MCF 10A (cell line): ENCODE measurements at regions of chr2 and their contacts with region 1.

Region 1: DNA sequence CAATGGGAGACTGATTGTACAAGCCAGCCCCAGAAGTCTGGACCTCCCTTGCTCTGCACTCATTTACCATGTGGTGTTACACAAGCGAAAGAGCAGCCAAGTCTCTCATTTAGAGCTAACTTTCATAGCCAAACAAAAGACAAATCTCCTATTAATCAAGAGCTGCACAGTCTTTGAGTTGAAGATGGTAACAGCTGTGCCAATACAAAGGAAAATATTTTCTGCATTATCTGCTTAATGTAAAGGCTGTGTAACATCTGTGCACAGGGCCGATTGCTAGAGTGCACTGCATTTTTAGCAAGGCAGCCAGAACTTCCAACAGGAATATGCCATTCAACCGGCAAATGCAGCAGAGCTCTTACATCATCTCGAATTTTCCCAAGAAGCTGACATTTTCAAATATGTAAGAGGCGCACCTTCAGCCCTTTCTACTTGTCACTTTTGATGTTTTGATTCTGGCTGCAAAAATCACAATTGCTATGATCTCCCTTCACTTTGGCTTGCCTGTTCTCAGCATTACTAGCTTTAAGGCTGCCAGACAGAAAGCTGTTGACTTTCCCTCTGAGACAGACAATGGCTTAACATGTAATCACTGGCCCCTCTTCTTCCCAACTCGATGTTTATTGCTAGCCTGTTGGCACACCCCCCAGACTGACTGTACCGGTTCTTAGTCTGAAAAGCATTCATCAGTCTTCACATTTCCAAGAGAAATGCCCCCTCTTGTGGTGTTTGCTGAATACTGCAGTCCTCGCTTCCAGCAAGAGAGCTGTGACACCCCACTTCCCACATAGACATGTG is 96.9 kb upstream of the TANK start:
- DNase-seq: peak; percentile 86
- H3K4me3 Mint-ChIP-seq: no peak overlapping the region
- H3K27ac Mint-ChIP-seq: no peak overlapping the region
- H3K4me1 Mint-ChIP-seq: peaks cover 6% of the 10 kb centered on the region
- H3K27me3 Mint-ChIP-seq: no peaks in the 10 kb centered on the region
- CTCF ChIP-seq: peak; percentile 86

Region 2: DNA sequence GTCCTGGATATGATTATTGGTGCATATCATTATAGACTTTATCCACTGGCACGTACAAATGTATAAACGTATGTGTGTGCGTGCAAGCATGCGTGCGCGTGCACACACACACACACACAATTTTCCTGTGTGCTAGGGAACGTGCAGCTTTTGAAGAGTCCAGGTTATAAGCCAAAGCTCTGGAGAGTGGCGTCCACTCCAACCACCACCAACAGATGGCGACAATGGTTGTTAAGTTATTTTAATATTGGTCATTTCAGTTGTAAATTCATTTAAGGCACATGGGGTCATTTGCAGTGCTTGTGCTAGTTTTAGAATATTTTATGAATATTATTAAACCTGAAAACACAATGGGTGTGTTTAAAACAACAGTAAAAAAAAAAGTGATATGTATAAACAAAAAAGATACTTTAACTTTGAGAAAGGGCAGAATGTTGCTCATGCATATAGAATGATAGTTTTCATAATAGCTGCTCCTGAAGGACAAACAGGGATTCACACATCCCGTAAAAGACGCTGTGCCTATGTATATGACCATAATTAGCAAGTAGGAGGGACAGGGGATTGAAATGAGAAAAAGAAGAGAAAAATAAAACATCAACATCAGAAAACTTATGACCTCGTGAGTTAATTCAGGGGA is 739.1 kb before region 1 on chr2:
- CTCF ChIA-PET with region 1: interaction called, 17 read pairs
- POLR2A ChIA-PET with region 1: no interaction called
- intact Hi-C with region 1: no loop called
- DNase-seq: peak; percentile 66
- H3K4me3 Mint-ChIP-seq: no peak overlapping the region
- H3K27ac Mint-ChIP-seq: peak overlapping the region; percentile 36
- H3K4me1 Mint-ChIP-seq: peaks cover 30% of the 10 kb centered on the region
- H3K27me3 Mint-ChIP-seq: no peaks in the 10 kb centered on the region
- CTCF ChIP-seq: peak; percentile 71

Region 3: DNA sequence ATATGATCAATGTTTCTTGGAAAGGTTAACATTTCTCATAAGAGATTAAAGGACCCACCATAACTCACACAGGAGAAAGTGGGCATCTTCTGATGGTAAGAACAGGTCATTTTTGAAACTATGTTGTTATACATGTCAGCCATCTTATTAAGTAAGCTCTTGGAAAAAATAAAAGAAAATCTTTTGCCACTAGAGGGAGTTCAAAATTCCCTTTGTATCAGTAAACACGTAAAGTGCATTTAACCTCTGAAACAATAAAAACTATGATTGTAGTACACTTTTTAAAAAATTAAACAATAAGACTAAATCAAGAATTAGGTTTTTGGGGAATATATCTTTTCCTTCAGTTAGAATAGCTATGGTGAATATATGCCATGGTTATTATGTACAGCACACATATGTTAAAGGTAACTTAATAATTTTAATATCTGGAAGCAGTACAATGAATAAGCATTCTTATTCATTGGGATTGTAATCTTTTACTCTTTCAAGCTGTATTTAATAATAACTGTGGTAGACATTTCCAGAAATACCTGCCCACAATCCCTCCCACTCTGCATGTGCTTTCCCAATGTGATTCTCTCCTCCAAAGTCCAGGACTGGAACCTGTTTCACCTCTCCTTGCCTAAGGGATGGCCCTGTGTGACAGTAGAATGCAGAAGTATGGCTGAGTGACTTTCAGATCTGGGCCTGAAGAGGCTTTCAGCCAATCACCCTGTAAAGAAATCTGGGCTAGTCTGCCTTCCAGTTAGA is 633.9 kb before region 1 on chr2:
- CTCF ChIA-PET with region 1: interaction called, 5 read pairs
- POLR2A ChIA-PET with region 1: no interaction called
- intact Hi-C with region 1: loop called (anchors 2 kb)
- DNase-seq: peak; percentile 62
- H3K4me3 Mint-ChIP-seq: no peak overlapping the region
- H3K27ac Mint-ChIP-seq: peak overlapping the region; percentile 93
- H3K4me1 Mint-ChIP-seq: peaks cover 24% of the 10 kb centered on the region
- H3K27me3 Mint-ChIP-seq: no peaks in the 10 kb centered on the region
- CTCF ChIP-seq: peak; percentile 32

Region 4: GRCh38 chr2:161004379-161004778 is 59.0 kb before region 1 on chr2:
- CTCF ChIA-PET with region 1: interaction called, 12 read pairs
- POLR2A ChIA-PET with region 1: no interaction called
- intact Hi-C with region 1: no loop called
- DNase-seq: peak; percentile 28
- H3K4me3 Mint-ChIP-seq: no peak overlapping the region
- H3K27ac Mint-ChIP-seq: no peak overlapping the region
- H3K4me1 Mint-ChIP-seq: no peaks in the 10 kb centered on the region
- H3K27me3 Mint-ChIP-seq: no peaks in the 10 kb centered on the region
- CTCF ChIP-seq: peak; percentile 39

Region 5: GRCh38 chr2:161036926-161037325 is 26.4 kb before region 1 on chr2:
- CTCF ChIA-PET with region 1: interaction called, 20 read pairs
- POLR2A ChIA-PET with region 1: interaction called, 3 read pairs
- intact Hi-C with region 1: no loop called
- DNase-seq: no peak
- H3K4me3 Mint-ChIP-seq: no peak overlapping the region
- H3K27ac Mint-ChIP-seq: no peak overlapping the region
- H3K4me1 Mint-ChIP-seq: no peaks in the 10 kb centered on the region
- H3K27me3 Mint-ChIP-seq: no peaks in the 10 kb centered on the region
- CTCF ChIP-seq: no peak

Region 6: DNA sequence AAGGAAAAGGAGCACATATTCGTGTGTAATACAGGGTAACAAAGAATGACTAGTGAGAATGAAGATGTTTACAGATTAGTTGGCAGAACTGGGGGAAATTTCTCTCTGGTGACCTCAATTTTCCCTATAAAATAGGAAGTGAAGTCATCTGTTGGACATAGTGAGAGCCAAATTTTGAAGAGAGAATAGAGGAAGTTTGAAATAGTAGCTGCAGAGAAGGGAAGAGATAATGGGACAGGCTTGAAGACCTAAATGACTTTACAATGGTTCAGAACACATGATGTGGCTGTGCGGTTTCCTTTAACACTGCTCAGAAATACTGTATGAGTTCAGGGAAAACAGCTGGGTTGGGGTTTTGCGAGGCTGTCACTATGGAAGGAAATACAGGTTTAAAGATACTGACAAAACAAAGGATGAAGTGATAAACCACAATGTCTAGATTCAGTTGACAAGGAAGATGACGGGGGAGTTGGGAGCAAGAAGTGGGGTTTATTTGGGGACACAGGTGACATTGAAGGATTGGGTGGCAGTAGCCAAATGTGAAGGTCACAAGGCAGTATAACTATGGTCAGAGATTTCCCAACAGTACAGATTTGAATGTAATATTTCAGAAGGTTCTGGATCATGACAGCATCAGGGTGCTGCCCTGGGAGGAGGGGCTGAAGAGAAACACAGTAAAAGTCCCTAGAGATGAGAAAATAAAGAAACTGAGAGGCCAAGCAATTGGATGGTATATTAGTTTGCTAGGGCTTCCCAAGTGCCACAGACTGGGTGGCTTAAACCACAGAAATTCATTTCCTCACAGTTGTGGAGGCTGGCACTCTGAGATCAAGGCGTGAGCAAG is 14.2 kb after region 1 on chr2:
- CTCF ChIA-PET with region 1: interaction called, 63 read pairs
- POLR2A ChIA-PET with region 1: interaction called, 5 read pairs
- intact Hi-C with region 1: no loop called
- DNase-seq: no peak
- H3K4me3 Mint-ChIP-seq: no peak overlapping the region
- H3K27ac Mint-ChIP-seq: peak overlapping the region; percentile 96
- H3K4me1 Mint-ChIP-seq: peaks cover 28% of the 10 kb centered on the region
- H3K27me3 Mint-ChIP-seq: no peaks in the 10 kb centered on the region
- CTCF ChIP-seq: no peak

Region 7: DNA sequence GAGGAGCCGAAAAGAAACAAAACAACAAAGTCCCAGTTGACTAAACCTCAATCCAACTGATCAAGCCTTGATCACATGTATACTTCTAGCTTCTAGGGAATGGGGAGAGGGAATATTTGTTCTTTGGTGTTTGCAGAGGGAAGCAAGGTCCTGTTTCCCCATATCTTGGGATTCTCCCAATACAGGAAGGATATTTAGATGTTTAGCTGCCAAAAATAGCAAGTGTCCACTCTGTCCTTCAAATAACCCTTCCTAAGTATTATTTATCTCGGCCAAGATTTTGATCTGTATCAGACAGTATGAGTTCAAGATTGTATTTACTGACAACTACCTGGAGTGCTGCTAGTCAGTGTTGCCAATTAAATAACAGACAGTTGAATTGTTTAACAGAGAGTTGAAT is 408.3 kb after region 1 on chr2:
- CTCF ChIA-PET with region 1: no interaction called
- POLR2A ChIA-PET with region 1: no interaction called
- intact Hi-C with region 1: no loop called
- DNase-seq: no peak
- H3K4me3 Mint-ChIP-seq: no peak overlapping the region
- H3K27ac Mint-ChIP-seq: no peak overlapping the region
- H3K4me1 Mint-ChIP-seq: no peaks in the 10 kb centered on the region
- H3K27me3 Mint-ChIP-seq: peaks cover 19% of the 10 kb centered on the region
- CTCF ChIP-seq: no peak